Activated CD4-positive, alpha-beta memory T cell treated with anti-CD3 and anti-CD28 coated beads for 36 hours (primary cell): ENCODE measurements at regions of chr6 and their contacts with region 1.

Region 1: DNA sequence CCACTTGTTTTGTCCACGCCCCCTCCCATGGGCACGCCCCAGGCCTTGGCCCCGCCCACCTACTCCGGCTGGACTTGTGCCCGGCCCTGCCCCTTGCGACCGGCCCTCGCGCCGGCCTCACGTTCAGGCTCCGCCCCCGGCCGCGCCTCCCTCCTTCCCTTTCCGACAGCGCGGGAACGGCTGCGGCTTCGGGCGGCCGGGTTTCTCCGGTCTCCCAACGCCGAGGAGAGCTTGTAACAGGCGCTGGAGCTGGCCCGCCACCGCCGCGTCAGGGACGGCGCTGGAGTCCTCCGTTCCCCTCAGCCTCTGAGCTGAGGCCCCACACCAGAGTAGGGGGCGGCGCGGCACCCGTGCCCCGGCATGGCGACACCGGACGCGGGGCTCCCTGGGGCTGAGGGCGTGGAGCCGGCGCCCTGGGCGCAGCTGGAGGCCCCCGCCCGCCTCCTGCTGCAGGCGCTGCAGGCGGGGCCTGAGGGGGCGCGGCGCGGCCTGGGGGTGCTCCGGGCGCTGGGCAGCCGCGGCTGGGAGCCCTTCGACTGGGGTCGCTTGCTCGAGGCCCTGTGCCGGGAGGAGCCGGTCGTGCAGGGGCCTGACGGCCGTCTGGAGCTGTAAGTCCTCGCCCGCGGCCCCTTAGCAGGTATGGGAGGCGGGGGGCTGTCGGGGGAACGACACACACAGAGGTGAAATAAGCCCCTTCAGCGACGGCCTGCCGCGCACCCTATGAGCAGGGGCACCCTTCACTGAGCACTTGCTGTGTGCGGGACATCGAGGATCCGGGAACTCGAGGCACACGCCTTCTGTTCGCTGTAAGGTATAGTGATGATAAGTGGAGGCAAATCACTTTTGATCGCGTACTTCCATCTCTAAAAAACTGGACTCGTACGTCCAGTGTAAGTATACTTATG is at the start of gene FANCE:
- DNase-seq: peak; percentile 97
- H3K4me3 Mint-ChIP-seq: peak within 1 kb of the TSS; percentile 80
- H3K27ac Mint-ChIP-seq: peak within 1 kb of the TSS; percentile 28
- H3K4me1 Mint-ChIP-seq: peaks cover 32% of the 10 kb centered on the region
- H3K27me3 Mint-ChIP-seq: no peaks in the 10 kb centered on the region
- total RNA-seq, gene FANCE: 18.9 to 19.2 TPM

Region 2: DNA sequence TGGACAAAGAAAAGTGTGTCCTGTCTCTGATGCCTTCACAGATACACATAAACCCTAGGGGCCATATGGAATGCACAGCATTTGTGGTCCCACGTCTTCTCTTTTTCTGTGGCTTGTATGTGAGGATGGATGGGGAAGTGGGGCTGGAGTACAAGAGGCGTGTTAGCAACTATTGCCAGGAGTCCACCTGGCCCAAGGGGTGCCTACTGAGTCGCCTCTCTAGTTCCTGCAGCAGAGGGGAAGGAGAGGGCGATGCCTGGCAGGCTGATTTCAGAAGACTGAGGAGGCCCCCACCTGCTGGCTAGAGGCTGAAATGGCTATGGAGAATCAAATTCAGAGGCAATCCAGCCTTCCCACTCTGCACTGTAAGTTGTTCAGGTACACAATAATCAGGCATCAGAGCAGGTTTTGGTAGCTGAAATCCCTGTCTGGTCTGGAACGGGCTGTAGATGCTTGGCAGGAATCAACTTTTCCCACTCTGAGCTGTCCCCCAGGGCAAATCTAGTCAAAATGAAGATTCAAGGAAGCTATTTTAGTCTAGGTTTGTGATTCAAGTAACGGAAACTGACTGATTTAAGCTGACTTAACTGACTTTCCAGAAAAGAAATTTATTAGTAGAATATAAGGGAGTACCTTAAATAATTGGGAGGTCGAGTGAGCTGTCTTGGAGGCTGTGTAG is 125.0 kb before region 1 on chr6:
- CTCF ChIA-PET with region 1: interaction called, 41 read pairs
- POLR2A ChIA-PET with region 1: no interaction called
- intact Hi-C with region 1: no loop called
- DNase-seq: peak; percentile 87
- H3K4me3 Mint-ChIP-seq: no peak overlapping the region
- H3K27ac Mint-ChIP-seq: peak overlapping the region; percentile 67
- H3K4me1 Mint-ChIP-seq: peaks cover 18% of the 10 kb centered on the region
- H3K27me3 Mint-ChIP-seq: no peaks in the 10 kb centered on the region

Region 3: GRCh38 chr6:35385457-35386202 is 66.8 kb before region 1 on chr6:
- CTCF ChIA-PET with region 1: no interaction called
- POLR2A ChIA-PET with region 1: no interaction called
- intact Hi-C with region 1: no loop called
- DNase-seq: no peak
- H3K4me3 Mint-ChIP-seq: no peak overlapping the region
- H3K27ac Mint-ChIP-seq: no peak overlapping the region
- H3K4me1 Mint-ChIP-seq: peaks cover 16% of the 10 kb centered on the region
- H3K27me3 Mint-ChIP-seq: no peaks in the 10 kb centered on the region

Region 4: DNA sequence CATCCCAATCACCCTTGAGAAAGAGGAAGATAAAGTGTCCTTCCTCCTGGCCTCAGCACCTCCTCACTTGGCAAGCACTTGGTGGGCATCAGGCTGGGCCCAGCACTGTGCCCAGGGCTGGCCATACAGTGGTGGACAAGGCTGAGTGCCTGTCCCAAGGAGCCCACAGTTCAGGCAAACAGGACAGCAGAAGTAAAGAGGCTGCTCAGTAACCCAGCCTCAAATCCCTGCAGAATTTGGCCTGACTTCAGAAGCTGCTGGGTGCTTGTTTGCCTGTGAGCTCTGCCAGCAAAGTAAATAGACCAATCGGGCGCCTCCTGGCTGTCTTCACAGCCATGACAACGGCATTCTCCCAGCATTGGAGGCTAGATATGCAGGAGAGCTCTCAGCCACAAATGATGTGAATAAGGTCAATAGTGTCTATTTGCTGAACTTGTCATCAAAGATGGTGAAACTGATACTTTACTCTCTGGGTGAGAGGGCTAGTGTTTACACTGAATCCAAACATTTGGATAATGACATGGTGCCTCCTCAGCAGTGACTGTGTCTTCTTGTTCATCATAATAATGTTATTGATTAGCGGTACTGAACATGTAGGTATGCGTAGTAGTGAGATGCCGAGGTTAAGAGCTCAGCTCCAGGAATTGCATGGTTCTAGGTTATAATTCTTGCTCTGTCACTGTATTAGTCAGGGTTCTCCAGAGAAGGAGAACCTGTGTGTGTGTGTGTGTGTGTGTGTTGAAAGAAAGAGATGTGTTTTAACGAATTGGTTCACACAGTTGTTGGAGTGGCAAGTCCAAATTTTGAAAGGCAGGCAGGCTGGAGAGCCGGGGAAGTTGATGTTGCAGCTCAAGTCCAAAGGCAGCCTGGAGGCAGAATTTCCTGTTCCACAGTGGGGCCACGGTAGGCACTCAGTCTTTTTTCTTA is 37.1 kb before region 1 on chr6:
- CTCF ChIA-PET with region 1: interaction called, 10 read pairs
- POLR2A ChIA-PET with region 1: no interaction called
- intact Hi-C with region 1: no loop called
- DNase-seq: peak; percentile 53
- H3K4me3 Mint-ChIP-seq: no peak overlapping the region
- H3K27ac Mint-ChIP-seq: peak overlapping the region; percentile 59
- H3K4me1 Mint-ChIP-seq: peaks cover 39% of the 10 kb centered on the region
- H3K27me3 Mint-ChIP-seq: no peaks in the 10 kb centered on the region

Region 5: GRCh38 chr6:35468181-35468979 is 15.9 kb after region 1 on chr6 and contains the start of gene RPL10A:
- CTCF ChIA-PET with region 1: interaction called, 83 read pairs
- POLR2A ChIA-PET with region 1: interaction called, 8 read pairs
- intact Hi-C with region 1: loop called (anchors 1 kb)
- DNase-seq: peak; percentile 97
- H3K4me3 Mint-ChIP-seq: peak within 1 kb of the TSS; percentile 95
- H3K27ac Mint-ChIP-seq: peak within 1 kb of the TSS; percentile 97
- H3K4me1 Mint-ChIP-seq: peaks cover 36% of the 10 kb centered on the region
- H3K27me3 Mint-ChIP-seq: no peaks in the 10 kb centered on the region
- total RNA-seq, gene RPL10A: 2,144 to 2,205 TPM

Region 6: GRCh38 chr6:35544523-35545313 is 92.3 kb after region 1 on chr6:
- CTCF ChIA-PET with region 1: no interaction called
- POLR2A ChIA-PET with region 1: no interaction called
- intact Hi-C with region 1: no loop called
- DNase-seq: no peak
- H3K4me3 Mint-ChIP-seq: no peak overlapping the region
- H3K27ac Mint-ChIP-seq: no peak overlapping the region
- H3K4me1 Mint-ChIP-seq: no peaks in the 10 kb centered on the region
- H3K27me3 Mint-ChIP-seq: peaks cover 3% of the 10 kb centered on the region

Region 7: DNA sequence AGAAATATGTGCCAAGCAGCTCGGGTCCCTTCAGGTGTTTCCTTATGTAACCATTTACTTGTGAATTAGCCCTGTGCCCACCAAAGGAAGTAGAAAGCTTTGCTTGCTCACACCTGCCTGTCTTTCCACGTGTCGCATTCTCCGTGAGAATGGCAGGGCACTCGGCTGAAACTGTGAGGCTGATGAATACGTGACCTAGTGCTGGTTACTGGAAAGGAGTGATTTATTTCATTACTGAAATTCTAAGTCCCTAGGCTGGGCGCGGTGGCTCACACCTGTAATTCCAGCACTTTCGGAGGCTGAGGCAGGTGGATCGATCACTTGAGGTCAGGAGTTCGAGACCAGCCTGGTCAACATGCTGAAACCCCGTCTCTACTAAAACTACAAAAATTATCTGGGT is 106.1 kb after region 1 on chr6:
- CTCF ChIA-PET with region 1: no interaction called
- POLR2A ChIA-PET with region 1: no interaction called
- intact Hi-C with region 1: no loop called
- DNase-seq: peak; percentile 33
- H3K4me3 Mint-ChIP-seq: no peak overlapping the region
- H3K27ac Mint-ChIP-seq: no peak overlapping the region
- H3K4me1 Mint-ChIP-seq: peaks cover 5% of the 10 kb centered on the region
- H3K27me3 Mint-ChIP-seq: peaks cover 1% of the 10 kb centered on the region